ENCODE measurements at regions of chr16 and their contacts with region 1.

Region 1: GRCh38 chr16:19502395-19503131 is 19.3 kb downstream of the GDE1 start:
- DNase-seq: peak; percentile 66
- H3K4me3 ChIP-seq: no peak overlapping the region
- H3K27ac ChIP-seq: no peak overlapping the region
- H3K4me1 ChIP-seq: no peaks in the 10 kb centered on the region
- H3K27me3 ChIP-seq: no peaks in the 10 kb centered on the region
- CTCF ChIP-seq: peak; percentile 81
- EP300 ChIP-seq: no peak
- RAD21 ChIP-seq: peak; percentile 78

Region 2: GRCh38 chr16:18983565-18984424 is 518.8 kb before region 1 on chr16 and contains the start of gene TMC7:
- CTCF ChIA-PET with region 1: interaction called, 15 read pairs
- POLR2A ChIA-PET with region 1: no interaction called
- DNase-seq: peak; percentile 94
- H3K4me3 ChIP-seq: peak within 1 kb of the TSS; percentile 61 to 77
- H3K27ac ChIP-seq: peak within 1 kb of the TSS; percentile 24 to 33; a peak in 2 of 4 replicates
- H3K4me1 ChIP-seq: peaks cover 0 to 3% of the 10 kb centered on the region in 2 experiments; a peak in 1 of 4 replicates
- H3K27me3 ChIP-seq: no peaks in the 10 kb centered on the region
- CTCF ChIP-seq: peak; percentile 87
- EP300 ChIP-seq: no peak
- RAD21 ChIP-seq: peak; percentile 77
- polyA plus RNA-seq, gene TMC7: 0.66 and 0.93 TPM in 2 replicates

Region 3: GRCh38 chr16:19382887-19383816 is 119.4 kb before region 1 on chr16:
- CTCF ChIA-PET with region 1: interaction called, 68 read pairs
- POLR2A ChIA-PET with region 1: interaction called, 3 read pairs
- DNase-seq: peak; percentile 78
- H3K4me3 ChIP-seq: peak overlapping the region in 1 of 2 experiments; percentile 12; a peak in 1 of 4 replicates
- H3K27ac ChIP-seq: no peak overlapping the region
- H3K4me1 ChIP-seq: peaks cover 0 to 11% of the 10 kb centered on the region in 2 experiments; a peak in 1 of 4 replicates
- H3K27me3 ChIP-seq: no peaks in the 10 kb centered on the region
- CTCF ChIP-seq: no peak
- EP300 ChIP-seq: no peak
- RAD21 ChIP-seq: no peak

Region 4: GRCh38 chr16:19389246-19389645 is 113.3 kb before region 1 on chr16:
- CTCF ChIA-PET with region 1: interaction called, 68 read pairs
- POLR2A ChIA-PET with region 1: interaction called, 3 read pairs
- DNase-seq: peak; percentile 60
- H3K4me3 ChIP-seq: no peak overlapping the region
- H3K27ac ChIP-seq: no peak overlapping the region
- H3K4me1 ChIP-seq: no peaks in the 10 kb centered on the region; a peak in 1 of 4 replicates
- H3K27me3 ChIP-seq: no peaks in the 10 kb centered on the region
- CTCF ChIP-seq: peak; percentile 50
- EP300 ChIP-seq: no peak
- RAD21 ChIP-seq: peak; percentile 62

Region 5: DNA sequence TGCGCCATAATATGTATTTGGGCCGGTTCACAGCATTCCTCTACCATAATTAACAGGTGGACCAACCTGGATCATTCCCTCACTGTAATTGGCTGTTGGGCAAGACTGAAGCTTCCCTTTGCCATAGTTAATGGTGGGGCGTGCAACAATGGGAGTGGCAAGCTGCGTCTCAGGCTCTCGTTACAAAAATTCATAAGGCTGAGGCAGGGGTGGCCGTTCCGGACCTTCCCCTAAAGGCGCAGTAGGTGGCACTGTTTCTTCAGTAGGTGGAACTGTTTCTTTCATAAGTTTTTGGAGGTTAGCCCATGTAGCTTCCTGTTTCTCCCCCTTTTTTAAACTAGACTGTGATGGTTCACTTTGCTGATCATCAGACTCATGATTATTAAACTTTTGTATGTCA is 101.9 kb before region 1 on chr16:
- CTCF ChIA-PET with region 1: interaction called, 12 read pairs
- POLR2A ChIA-PET with region 1: no interaction called
- DNase-seq: no peak
- H3K4me3 ChIP-seq: no peak overlapping the region
- H3K27ac ChIP-seq: no peak overlapping the region
- H3K4me1 ChIP-seq: no peaks in the 10 kb centered on the region; a peak in 1 of 4 replicates
- H3K27me3 ChIP-seq: no peaks in the 10 kb centered on the region
- CTCF ChIP-seq: no peak
- EP300 ChIP-seq: no peak
- RAD21 ChIP-seq: peak; percentile 19; the same call in 1 of the 2 replicates

Region 6: GRCh38 chr16:19488213-19488640 is 14.3 kb before region 1 on chr16:
- CTCF ChIA-PET with region 1: interaction called, 13 read pairs
- POLR2A ChIA-PET with region 1: no interaction called
- DNase-seq: no peak
- H3K4me3 ChIP-seq: no peak overlapping the region
- H3K27ac ChIP-seq: no peak overlapping the region
- H3K4me1 ChIP-seq: no peaks in the 10 kb centered on the region
- H3K27me3 ChIP-seq: no peaks in the 10 kb centered on the region
- CTCF ChIP-seq: no peak
- EP300 ChIP-seq: no peak
- RAD21 ChIP-seq: no peak

Region 7: DNA sequence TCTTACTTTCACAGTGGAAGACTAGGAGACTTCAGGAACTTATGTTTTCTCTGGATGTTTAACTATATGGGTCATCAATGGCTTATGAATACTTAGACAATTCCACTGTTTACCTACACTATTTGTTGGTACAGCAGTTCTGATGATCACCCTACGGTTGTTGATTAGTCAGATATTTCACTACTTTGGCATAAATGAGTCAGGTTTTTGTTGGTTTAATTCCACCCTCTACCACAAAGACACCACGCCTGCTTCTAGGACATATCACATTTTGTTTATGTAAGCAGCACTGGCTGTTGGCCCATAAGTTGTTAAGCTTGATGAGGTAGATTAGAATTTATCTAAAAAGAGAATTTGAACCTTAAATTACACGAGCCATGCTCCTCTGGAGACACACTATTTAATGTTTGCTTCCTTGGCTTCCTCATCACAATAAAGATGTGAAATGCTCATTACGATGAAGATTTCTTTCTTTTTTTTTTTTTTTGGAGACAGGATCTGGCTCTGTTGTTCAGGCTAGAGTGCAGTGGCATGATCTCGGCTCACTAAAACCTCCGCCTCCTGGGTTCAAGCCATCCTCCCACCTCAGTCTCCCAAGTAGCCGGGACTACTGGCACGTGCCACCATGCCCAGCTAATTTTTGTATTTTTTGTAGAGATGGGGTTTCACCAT is 15.0 kb after region 1 on chr16:
- CTCF ChIA-PET with region 1: interaction called, 26 read pairs
- POLR2A ChIA-PET with region 1: no interaction called
- DNase-seq: no peak
- H3K4me3 ChIP-seq: no peak overlapping the region
- H3K27ac ChIP-seq: no peak overlapping the region
- H3K4me1 ChIP-seq: peaks cover 0 to 14% of the 10 kb centered on the region in 2 experiments; a peak in 3 of 4 replicates
- H3K27me3 ChIP-seq: no peaks in the 10 kb centered on the region
- CTCF ChIP-seq: no peak
- EP300 ChIP-seq: no peak
- RAD21 ChIP-seq: no peak

Measured in SK-N-SH (cell line).